Cardiac septum (tissue), 1 donor: ENCODE measurements at regions of chr17 and their contacts with region 1.

Region 1: GRCh38 chr17:4709794-4710692 is at the start of gene ARRB2:
- DNase-seq: peak; percentile 100
- total RNA-seq, gene ARRB2: 20.8 TPM

Region 2: GRCh38 chr17:4733073-4733531 is 23.1 kb after region 1 on chr17:
- intact Hi-C with region 1: loop called (anchors 1 kb)
- DNase-seq: no peak

Region 3: GRCh38 chr17:4872786-4873185 is 162.7 kb after region 1 on chr17:
- intact Hi-C with region 1: no loop called
- DNase-seq: no peak

Region 4: DNA sequence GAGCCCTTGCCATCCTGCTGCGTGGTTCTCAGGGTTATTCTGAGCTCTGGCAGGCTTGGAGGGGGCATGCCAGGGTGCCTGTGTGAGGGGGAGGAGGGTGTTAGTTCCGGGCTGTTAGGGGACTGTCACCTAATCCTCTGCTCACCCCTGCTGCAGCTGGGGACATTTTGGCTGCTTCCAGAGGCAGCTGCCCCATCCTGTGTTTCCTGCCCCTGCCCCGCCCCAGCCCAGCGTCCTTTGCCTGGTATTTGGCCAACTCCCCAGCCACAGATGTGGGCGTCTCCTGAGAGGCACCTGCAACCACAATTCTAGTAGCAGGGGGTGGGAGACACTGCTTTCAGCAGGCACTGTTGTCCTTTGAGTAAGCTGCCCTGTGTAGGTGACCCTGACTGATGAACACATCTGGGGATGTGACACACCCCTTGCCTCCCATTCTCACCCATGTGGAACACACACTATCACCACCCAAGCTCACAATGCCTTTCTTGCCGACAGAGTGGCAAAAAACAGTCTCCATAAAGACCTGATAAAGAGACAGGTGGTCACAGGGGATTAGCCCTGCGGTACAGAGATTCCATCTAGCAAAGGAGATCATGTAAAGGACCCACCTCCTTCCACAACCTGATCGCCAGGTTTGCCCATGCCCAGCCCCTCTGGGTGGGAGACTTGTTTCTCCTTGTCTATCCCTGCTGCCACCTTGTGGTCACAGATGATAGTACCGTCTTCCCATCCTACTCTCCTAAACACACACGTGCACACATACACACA is 193.2 kb after region 1 on chr17 and contains the start of gene CHRNE:
- intact Hi-C with region 1: loop called (anchors 5 kb)
- DNase-seq: no peak
- total RNA-seq, gene CHRNE: 5.5 TPM